Activated naive CD4-positive, alpha-beta T cell treated with anti-CD3 and anti-CD28 coated beads, Interleukin-2, amount 10 ng/mL, durations not matched to agents 7 days and 5 days (primary cell): ENCODE measurements at regions of chr2 and their contacts with region 1.

Region 1: GRCh38 chr2:157194097-157194688 is 63.3 kb upstream of the GALNT5 start:
- DNase-seq: no peak
- H3K4me3 Mint-ChIP-seq: no peak overlapping the region
- H3K27ac Mint-ChIP-seq: no peak overlapping the region
- H3K4me1 Mint-ChIP-seq: peaks cover 3% of the 10 kb centered on the region
- H3K27me3 Mint-ChIP-seq: peaks cover 6% of the 10 kb centered on the region

Region 2: DNA sequence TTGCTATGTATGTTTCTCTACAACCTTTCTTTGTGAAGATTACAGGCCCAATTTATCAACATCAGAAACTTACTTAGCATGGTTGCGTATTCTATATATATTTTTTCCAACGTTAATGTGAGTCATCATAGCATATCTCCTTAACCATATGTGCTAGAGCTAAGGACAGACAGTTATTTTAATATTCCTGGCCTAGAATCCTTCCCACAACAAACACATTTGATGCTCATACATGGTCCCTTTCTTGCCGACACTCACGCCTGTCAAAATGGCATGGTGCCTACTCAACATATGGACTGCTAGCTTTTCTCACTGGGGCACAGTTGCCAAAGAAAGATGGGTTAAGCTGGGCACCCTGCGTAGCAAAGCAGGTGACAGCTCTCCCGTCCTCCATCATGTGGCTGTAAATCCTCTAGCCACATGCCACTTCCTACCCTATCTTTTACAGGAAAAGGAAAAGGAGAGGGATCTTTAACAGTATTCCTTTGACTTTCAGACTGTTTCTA is 11.9 kb before region 1 on chr2:
- CTCF ChIA-PET with region 1: interaction called, 15 read pairs
- DNase-seq: no peak
- H3K4me3 Mint-ChIP-seq: no peak overlapping the region
- H3K27ac Mint-ChIP-seq: no peak overlapping the region
- H3K4me1 Mint-ChIP-seq: peaks cover 9% of the 10 kb centered on the region
- H3K27me3 Mint-ChIP-seq: peaks cover 5% of the 10 kb centered on the region

Region 3: DNA sequence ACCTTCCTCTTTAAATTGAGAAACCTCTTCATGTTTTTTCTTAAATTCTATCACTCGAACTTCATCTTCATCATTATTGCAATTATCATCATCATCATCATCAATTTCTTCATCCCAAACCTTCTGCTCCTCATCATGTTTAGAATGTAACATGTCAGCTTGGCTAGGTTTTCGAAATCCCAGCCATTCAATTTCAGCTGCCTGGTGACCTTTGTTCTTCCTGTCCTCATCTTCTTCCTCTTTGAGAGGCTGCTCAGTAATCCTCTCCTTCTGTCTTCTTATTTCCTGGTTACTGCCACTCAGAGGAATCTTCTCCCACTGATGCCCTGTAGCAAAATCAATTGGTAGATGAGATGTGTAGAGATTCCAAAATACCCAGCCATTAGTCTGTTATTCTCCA is 127.3 kb after region 1 on chr2:
- CTCF ChIA-PET with region 1: no interaction called
- DNase-seq: no peak
- H3K4me3 Mint-ChIP-seq: no peak overlapping the region
- H3K27ac Mint-ChIP-seq: no peak overlapping the region
- H3K4me1 Mint-ChIP-seq: peaks cover 7% of the 10 kb centered on the region
- H3K27me3 Mint-ChIP-seq: no peaks in the 10 kb centered on the region